ENCODE measurements at regions of chr17 and their contacts with region 1.

Region 1: DNA sequence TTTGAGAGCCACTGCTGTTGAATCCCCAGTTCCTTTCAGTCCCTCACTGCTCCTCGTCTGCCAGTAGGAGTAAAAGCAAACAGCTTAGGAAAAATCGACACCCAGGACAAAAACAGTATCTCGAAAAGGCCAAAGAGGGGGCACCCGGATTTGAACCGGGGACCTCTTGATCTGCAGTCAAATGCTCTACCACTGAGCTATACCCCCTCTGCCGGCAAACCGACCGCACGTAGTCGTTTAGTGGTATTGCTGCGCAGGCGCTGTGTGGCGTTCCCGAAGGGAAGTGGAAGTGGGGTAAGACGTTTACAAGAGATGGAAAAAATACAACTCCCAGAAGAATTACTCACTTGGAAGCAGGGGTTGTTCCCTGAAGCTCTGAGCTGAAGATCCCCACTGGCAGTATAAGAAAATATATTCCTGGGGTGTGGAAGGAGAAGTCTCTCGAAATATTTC is 2.2 kb upstream of the PLXDC1 start:
- DNase-seq: peak; percentile 89 to 98 (median 94)
- ATAC-seq: peak; percentile 60
- H3K4me3 ChIP-seq: peak overlapping the region; percentile 94
- H3K4me3 Mint-ChIP-seq: peak overlapping the region; percentile 99
- H3K27ac ChIP-seq: peak overlapping the region; percentile 47 to 69
- H3K27ac Mint-ChIP-seq: peak overlapping the region; percentile 97
- H3K4me1 ChIP-seq: peaks cover 55% of the 10 kb centered on the region
- H3K4me1 Mint-ChIP-seq: peaks cover 47% of the 10 kb centered on the region
- H3K27me3 ChIP-seq: peaks cover 0 to 5% of the 10 kb centered on the region in 2 experiments
- H3K27me3 Mint-ChIP-seq: peaks cover 19% of the 10 kb centered on the region
- CTCF ChIP-seq: no peak

Region 2: GRCh38 chr17:38752119-38752929 is 401.3 kb before region 1 on chr17 and contains the start of gene PSMB3:
- CTCF ChIA-PET with region 1: no interaction called
- POLR2A ChIA-PET with region 1: interaction called, 4 read pairs
- intact Hi-C with region 1: loop called in 1 of 2 experiments (anchors 10 kb)
- DNase-seq: peak; percentile 86 to 100 (median 93)
- ATAC-seq: peak; percentile 85
- H3K4me3 ChIP-seq: peak within 1 kb of the TSS; percentile 90
- H3K4me3 Mint-ChIP-seq: peak within 1 kb of the TSS; percentile 99
- H3K27ac ChIP-seq: peak within 1 kb of the TSS; percentile 80 to 93
- H3K27ac Mint-ChIP-seq: peak within 1 kb of the TSS; percentile 83
- H3K4me1 ChIP-seq: peaks cover 69% of the 10 kb centered on the region
- H3K4me1 Mint-ChIP-seq: peaks cover 38% of the 10 kb centered on the region
- H3K27me3 ChIP-seq: peaks cover 31 to 33% of the 10 kb centered on the region in 2 experiments
- H3K27me3 Mint-ChIP-seq: peaks cover 27% of the 10 kb centered on the region
- CTCF ChIP-seq: no peak
- total RNA-seq, gene PSMB3: 46.6 to 55.0 TPM

Region 3: GRCh38 chr17:38868817-38869525 is 284.7 kb before region 1 on chr17:
- CTCF ChIA-PET with region 1: interaction called, 30 read pairs
- POLR2A ChIA-PET with region 1: interaction called, 58 read pairs
- intact Hi-C with region 1: loop called (anchors 1 kb)
- DNase-seq: peak; percentile 81 to 92 (median 86)
- ATAC-seq: peak; percentile 57
- H3K4me3 ChIP-seq: peak overlapping the region; percentile 97
- H3K4me3 Mint-ChIP-seq: peak overlapping the region; percentile 98
- H3K27ac ChIP-seq: peak overlapping the region; percentile 53 to 86
- H3K27ac Mint-ChIP-seq: peak overlapping the region; percentile 95
- H3K4me1 ChIP-seq: peaks cover 52% of the 10 kb centered on the region
- H3K4me1 Mint-ChIP-seq: peaks cover 52% of the 10 kb centered on the region
- H3K27me3 ChIP-seq: no peaks in the 10 kb centered on the region
- H3K27me3 Mint-ChIP-seq: peaks cover 13% of the 10 kb centered on the region
- CTCF ChIP-seq: no peak

Region 4: DNA sequence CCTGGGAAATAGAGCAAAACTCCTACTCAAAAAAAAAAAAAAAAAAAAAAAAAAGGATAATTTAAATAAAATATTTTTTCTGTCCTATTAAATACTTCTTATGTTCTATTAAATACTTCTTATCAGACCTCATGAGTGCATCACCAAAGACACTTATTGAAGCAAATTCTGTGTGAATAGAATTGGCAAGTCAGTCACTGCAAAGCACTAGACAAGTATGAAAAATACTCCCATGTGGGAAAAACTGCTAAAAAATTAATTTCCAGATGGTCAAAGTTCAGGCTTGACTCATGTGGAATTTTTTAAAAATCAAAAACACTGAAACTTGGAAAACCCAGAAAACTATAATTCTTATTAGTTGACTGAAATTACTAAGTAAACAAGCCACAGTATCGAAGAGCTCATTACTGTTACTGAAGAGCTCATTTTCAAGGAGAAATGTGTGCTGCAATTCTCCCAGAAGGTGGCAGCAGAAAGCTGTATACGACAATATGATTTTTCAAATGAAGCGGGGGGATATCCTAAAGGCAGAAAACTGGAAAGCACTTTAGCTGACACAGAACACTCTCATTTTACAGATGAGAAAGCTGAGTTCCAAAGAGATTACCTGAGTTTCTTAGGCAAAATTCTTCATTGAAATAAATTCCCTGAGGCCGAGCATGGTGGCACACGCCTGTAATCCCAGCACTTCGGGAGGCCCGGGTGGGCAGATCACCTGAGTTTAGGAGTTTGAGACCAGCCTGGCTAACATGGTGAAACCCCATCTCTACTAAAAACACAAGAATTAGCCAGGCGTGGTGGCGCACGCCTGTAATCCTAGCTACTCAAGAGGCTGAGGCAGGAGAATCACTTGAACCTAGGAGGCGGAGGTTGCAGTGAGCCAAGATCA is 170.5 kb before region 1 on chr17:
- CTCF ChIA-PET with region 1: interaction called, 80 read pairs
- POLR2A ChIA-PET with region 1: interaction called, 64 read pairs
- intact Hi-C with region 1: loop called (anchors 1 kb)
- DNase-seq: peak in 12 of 14 experiments; percentile 12 to 81 (median 38)
- ATAC-seq: peak; percentile 83
- H3K4me3 ChIP-seq: no peak overlapping the region
- H3K4me3 Mint-ChIP-seq: no peak overlapping the region
- H3K27ac ChIP-seq: no peak overlapping the region
- H3K27ac Mint-ChIP-seq: no peak overlapping the region
- H3K4me1 ChIP-seq: peaks cover 2% of the 10 kb centered on the region
- H3K4me1 Mint-ChIP-seq: peaks cover 6% of the 10 kb centered on the region
- H3K27me3 ChIP-seq: no peaks in the 10 kb centered on the region
- H3K27me3 Mint-ChIP-seq: no peaks in the 10 kb centered on the region
- CTCF ChIP-seq: peak; percentile 90

Region 5: DNA sequence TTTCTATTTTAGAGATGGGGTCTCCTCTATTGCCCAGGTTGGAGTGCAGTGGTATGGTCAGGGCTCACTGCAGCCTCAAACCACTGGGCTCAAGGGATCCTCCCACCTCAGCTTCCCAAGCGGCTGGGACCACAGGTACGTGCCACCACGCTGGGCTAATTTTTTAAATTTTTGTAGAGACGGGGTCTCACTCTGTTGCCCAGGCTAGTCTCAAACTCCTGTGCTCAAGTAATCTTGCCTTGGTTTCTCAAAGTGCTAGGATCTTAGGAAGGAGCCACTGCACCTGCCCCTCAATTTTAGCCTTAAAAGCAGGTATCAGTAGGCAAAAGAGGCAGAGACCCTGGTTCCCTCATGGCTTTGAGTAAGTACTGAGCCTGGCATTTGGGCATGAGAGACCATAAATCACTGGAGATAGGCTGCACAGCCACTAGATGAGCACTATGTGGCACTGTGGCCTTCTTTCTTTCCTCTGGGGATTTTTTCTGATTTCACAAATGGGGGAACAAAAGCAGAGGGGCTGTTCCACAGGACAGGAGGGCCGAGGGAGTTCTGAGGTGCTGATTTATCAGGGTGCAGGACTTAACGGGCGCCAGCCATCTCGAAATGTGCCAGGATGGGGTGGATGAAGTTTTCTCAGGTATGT is 84.4 kb before region 1 on chr17:
- CTCF ChIA-PET with region 1: interaction called, 4 read pairs
- POLR2A ChIA-PET with region 1: interaction called, 8 read pairs
- intact Hi-C with region 1: loop called (anchors 1 kb)
- DNase-seq: peak in 4 of 14 experiments; percentile 45 to 70 (median 66)
- ATAC-seq: peak; percentile 97
- H3K4me3 ChIP-seq: no peak overlapping the region
- H3K4me3 Mint-ChIP-seq: no peak overlapping the region
- H3K27ac ChIP-seq: no peak overlapping the region
- H3K27ac Mint-ChIP-seq: no peak overlapping the region
- H3K4me1 ChIP-seq: peaks cover 7% of the 10 kb centered on the region
- H3K4me1 Mint-ChIP-seq: peaks cover 6% of the 10 kb centered on the region
- H3K27me3 ChIP-seq: no peaks in the 10 kb centered on the region
- H3K27me3 Mint-ChIP-seq: no peaks in the 10 kb centered on the region
- CTCF ChIP-seq: peak; percentile 72

Region 6: DNA sequence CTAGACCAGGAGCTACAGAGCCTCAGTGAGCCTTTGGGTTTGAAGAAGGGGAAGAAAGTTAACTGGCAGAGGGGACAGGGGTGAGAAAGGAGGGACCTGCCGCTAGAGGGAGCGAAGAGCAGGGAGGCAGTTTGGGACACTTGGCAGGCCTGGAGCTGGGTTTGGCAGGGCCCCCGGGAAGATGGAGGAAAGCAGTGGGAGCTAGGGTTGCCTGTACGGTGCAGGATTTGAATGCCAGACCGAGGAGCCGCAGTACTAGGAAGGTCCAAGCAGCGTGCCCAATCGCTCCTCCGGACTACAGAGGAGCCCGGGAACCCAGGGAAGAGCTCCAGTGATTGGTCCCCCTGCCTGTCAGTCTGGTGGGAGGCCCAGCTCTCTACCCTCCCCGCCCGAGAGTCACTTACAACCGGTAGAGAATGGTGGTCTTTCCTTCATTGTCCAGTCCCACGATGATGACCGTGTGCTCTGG is 11.1 kb after region 1 on chr17:
- CTCF ChIA-PET with region 1: interaction called, 38 read pairs
- POLR2A ChIA-PET with region 1: interaction called, 24 read pairs
- intact Hi-C with region 1: no loop called
- DNase-seq: peak; percentile 56 to 85 (median 63)
- ATAC-seq: peak; percentile 86
- H3K4me3 ChIP-seq: peak overlapping the region; percentile 60
- H3K4me3 Mint-ChIP-seq: peak overlapping the region; percentile 90
- H3K27ac ChIP-seq: no peak overlapping the region
- H3K27ac Mint-ChIP-seq: no peak overlapping the region
- H3K4me1 ChIP-seq: peaks cover 32% of the 10 kb centered on the region
- H3K4me1 Mint-ChIP-seq: peaks cover 27% of the 10 kb centered on the region
- H3K27me3 ChIP-seq: peaks cover 17 to 22% of the 10 kb centered on the region in 2 experiments
- H3K27me3 Mint-ChIP-seq: peaks cover 34% of the 10 kb centered on the region
- CTCF ChIP-seq: peak; percentile 94

Region 7: GRCh38 chr17:39181303-39181702 is 27.7 kb after region 1 on chr17:
- CTCF ChIA-PET with region 1: no interaction called
- POLR2A ChIA-PET with region 1: no interaction called
- intact Hi-C with region 1: no loop called
- DNase-seq: no peak
- ATAC-seq: no peak
- H3K4me3 ChIP-seq: no peak overlapping the region
- H3K4me3 Mint-ChIP-seq: no peak overlapping the region
- H3K27ac ChIP-seq: no peak overlapping the region
- H3K27ac Mint-ChIP-seq: no peak overlapping the region
- H3K4me1 ChIP-seq: no peaks in the 10 kb centered on the region
- H3K4me1 Mint-ChIP-seq: no peaks in the 10 kb centered on the region
- H3K27me3 ChIP-seq: no peaks in the 10 kb centered on the region
- H3K27me3 Mint-ChIP-seq: no peaks in the 10 kb centered on the region
- CTCF ChIP-seq: no peak

Region 8: DNA sequence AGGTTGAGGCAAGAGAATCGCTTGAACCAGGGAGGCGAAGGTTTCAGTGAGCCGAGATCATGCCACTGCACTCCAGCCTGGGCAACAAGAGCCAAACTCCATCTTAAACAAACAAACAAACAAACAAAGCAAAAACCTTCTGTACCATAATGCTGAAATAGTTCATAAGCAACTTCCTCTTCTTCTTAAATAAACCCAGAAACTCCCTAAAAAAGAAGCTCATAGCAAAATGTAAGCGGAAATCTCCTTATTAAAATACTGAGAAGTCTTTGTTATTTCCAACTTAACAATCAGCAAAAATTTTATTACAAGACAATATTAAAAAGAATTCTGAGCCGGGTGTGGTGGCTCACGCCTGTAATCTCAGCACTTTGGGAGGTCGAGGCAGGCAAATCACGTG is 165.0 kb after region 1 on chr17:
- CTCF ChIA-PET with region 1: no interaction called
- POLR2A ChIA-PET with region 1: no interaction called
- intact Hi-C with region 1: no loop called
- DNase-seq: no peak
- ATAC-seq: no peak
- H3K4me3 ChIP-seq: no peak overlapping the region
- H3K4me3 Mint-ChIP-seq: no peak overlapping the region
- H3K27ac ChIP-seq: no peak overlapping the region
- H3K27ac Mint-ChIP-seq: no peak overlapping the region
- H3K4me1 ChIP-seq: no peaks in the 10 kb centered on the region
- H3K4me1 Mint-ChIP-seq: no peaks in the 10 kb centered on the region
- H3K27me3 ChIP-seq: no peaks in the 10 kb centered on the region
- H3K27me3 Mint-ChIP-seq: no peaks in the 10 kb centered on the region
- CTCF ChIP-seq: no peak